Ascending aorta (tissue), 2 donors: ENCODE measurements at regions of chr22 and their contacts with region 1.

Region 1: DNA sequence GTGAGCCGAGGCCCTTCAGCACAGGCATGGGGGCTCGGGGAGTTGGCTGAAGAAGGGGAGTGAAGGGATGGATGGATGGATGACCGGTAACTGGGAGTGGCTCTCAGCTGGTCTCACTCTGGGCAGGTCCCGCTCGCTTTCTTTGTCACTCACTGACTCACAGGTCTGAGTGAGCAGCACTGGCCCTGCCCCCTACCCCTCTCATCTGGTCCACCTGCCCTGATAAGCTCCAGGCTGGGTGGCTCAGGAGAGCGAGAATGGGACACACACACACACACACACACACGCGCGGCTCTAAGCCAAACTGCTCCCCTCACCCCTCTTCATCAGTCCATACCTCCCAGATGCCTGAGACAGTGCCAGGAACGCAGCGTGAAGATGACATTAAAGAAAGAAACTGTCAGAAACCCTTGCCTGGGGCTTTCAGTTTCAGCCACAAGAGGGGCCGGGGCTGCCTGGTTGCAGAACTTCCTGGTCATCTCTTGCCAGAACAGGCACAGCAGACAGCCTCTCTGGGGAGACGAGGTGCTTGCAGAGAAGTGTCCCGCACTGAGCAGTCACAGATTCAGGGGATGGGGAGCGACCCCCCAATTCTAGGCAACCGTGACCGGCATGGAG is 16.5 kb upstream of the SHISAL1 start:
- DNase-seq: no peak
- H3K4me3 ChIP-seq: no peak overlapping the region
- H3K27ac ChIP-seq: no peak overlapping the region
- H3K4me1 ChIP-seq: peaks cover 3 to 8% of the 10 kb centered on the region in 2 donors
- H3K27me3 ChIP-seq: peaks cover 9% of the 10 kb centered on the region
- CTCF ChIP-seq: no peak

Region 2: GRCh38 chr22:44080936-44081861 is 248.1 kb before region 1 on chr22:
- intact Hi-C with region 1: loop called (anchors 10 kb)
- DNase-seq: peak; percentile 22 to 78
- H3K4me3 ChIP-seq: peak overlapping the region in 1 of 2 donors; percentile 41
- H3K27ac ChIP-seq: no peak overlapping the region
- H3K4me1 ChIP-seq: peaks cover 0 to 4% of the 10 kb centered on the region in 2 donors
- H3K27me3 ChIP-seq: no peaks in the 10 kb centered on the region
- CTCF ChIP-seq: peak; percentile 62 to 89 (median 82)

Region 3: DNA sequence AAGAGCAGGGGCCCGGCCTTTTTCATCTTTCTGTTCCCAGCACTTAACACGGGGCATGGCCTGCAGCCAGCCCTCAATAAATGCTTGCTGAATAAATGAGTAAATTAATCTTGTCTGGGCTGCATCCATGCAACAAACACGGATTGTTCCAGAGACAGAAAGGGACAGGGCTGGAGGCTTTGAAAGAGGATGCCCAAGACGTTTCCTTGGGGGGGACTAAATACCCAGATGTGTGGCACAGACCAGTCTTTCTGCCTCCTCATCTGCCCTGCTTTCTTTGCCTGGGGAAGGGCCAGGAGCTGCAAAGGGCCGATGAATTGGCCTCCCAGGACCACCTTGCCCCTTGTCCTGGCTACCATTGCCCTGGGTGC is 56.9 kb before region 1 on chr22:
- intact Hi-C with region 1: no loop called
- DNase-seq: no peak
- H3K4me3 ChIP-seq: no peak overlapping the region
- H3K27ac ChIP-seq: no peak overlapping the region
- H3K4me1 ChIP-seq: no peaks in the 10 kb centered on the region
- H3K27me3 ChIP-seq: no peaks in the 10 kb centered on the region
- CTCF ChIP-seq: no peak